CD4-positive, alpha-beta memory T cell (primary cell): ENCODE measurements at regions of chr11 and their contacts with region 1.

Region 1: DNA sequence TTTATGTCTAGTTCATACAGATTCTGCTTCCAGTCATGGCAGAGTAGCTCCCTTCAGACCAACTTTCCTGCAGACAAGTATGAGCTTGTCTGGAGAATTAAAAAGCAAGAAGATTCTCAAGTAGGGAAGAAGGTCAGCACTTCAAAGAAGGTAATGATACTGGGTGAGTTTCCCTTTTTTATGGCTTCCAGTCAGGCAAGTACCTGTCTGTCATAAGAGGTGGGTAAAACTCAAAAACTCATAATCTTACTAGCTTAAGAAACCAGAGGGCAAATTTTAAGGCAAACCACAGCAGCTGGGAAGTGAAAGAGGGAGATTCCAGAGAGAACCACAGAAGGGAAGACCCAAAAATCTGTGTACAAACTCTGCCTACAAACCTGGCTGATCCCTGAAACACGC is 54.2 kb downstream of the DENND5A start:
- DNase-seq: no peak
- H3K4me3 ChIP-seq: no peak overlapping the region
- H3K4me3 Mint-ChIP-seq: no peak overlapping the region
- H3K27ac ChIP-seq: no peak overlapping the region
- H3K27ac Mint-ChIP-seq: peak overlapping the region in 2 of 7 donors; percentile 10 to 14
- H3K4me1 ChIP-seq: peaks cover 47% of the 10 kb centered on the region
- H3K4me1 Mint-ChIP-seq: peaks cover 27 to 61% (median 46%) of the 10 kb centered on the region in 4 donors
- H3K27me3 ChIP-seq: no peaks in the 10 kb centered on the region
- H3K27me3 Mint-ChIP-seq: no peaks in the 10 kb centered on the region

Region 2: GRCh38 chr11:9132203-9132878 is 78.6 kb before region 1 on chr11:
- CTCF ChIA-PET with region 1: no interaction called
- POLR2A ChIA-PET with region 1: no interaction called
- intact Hi-C with region 1: no loop called
- DNase-seq: no peak
- H3K4me3 ChIP-seq: no peak overlapping the region
- H3K4me3 Mint-ChIP-seq: no peak overlapping the region
- H3K27ac ChIP-seq: no peak overlapping the region
- H3K27ac Mint-ChIP-seq: peak overlapping the region in 1 of 7 donors; percentile 6
- H3K4me1 ChIP-seq: peaks cover 7% of the 10 kb centered on the region
- H3K4me1 Mint-ChIP-seq: peaks cover 2 to 11% (median 6%) of the 10 kb centered on the region in 4 donors
- H3K27me3 ChIP-seq: no peaks in the 10 kb centered on the region
- H3K27me3 Mint-ChIP-seq: no peaks in the 10 kb centered on the region

Region 3: DNA sequence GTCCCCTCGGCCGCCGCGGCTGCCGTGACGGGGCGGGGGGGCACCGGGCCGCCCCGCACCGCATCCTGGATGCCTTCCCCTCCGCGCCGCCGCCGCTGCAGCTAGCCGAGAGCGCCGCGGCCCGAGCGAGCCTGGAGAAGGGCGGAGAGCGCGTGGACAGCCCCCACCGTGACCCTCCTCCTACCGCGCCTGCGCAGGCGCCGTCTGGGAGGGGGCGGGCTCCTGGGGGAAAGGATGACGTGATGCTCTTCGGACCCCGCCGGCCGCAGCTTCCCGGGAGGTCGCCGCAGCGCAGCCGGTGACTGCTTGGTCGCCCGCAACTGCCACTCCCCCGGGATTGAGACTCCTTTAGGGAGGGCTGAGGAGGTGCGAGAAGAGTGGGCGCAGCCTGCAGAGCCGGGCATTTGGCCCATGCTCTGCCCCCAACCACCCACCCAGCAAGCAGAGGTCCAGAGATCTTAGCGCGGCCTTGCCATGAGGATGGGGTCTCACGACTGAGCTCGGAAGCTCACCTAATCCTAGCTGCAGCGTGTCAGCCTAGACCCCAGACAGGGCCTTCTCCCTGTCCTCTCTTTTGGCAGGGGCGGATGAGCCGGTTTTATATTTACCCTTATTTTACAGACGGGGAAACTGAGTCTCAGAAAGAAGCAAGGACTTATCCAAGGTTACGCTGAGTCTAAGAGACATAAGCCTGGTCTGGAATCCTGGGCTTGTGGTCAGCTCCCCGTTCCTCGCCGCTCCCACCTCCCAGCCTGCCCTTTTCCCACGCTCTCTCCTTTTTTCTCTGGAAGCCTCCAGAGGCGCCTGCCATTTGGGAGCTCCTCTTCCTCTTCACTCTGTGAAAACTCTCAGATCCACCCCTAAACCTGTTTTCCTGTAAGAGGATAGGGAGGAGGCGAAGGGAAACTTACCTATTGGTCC is 54.5 kb after region 1 on chr11 and contains the start of gene DENND5A:
- CTCF ChIA-PET with region 1: no interaction called
- POLR2A ChIA-PET with region 1: no interaction called
- intact Hi-C with region 1: loop called (anchors 5 kb)
- DNase-seq: peak; percentile 32 to 51 (median 35)
- H3K4me3 ChIP-seq: peak within 1 kb of the TSS; percentile 68 to 76
- H3K4me3 Mint-ChIP-seq: peak within 1 kb of the TSS; percentile 90 to 99 (median 97)
- H3K27ac ChIP-seq: peak within 1 kb of the TSS; percentile 48
- H3K27ac Mint-ChIP-seq: peak within 1 kb of the TSS; percentile 92 to 97 (median 95)
- H3K4me1 ChIP-seq: peaks cover 33% of the 10 kb centered on the region
- H3K4me1 Mint-ChIP-seq: peaks cover 25 to 39% (median 31%) of the 10 kb centered on the region in 4 donors
- H3K27me3 ChIP-seq: no peaks in the 10 kb centered on the region
- H3K27me3 Mint-ChIP-seq: peaks cover 0 to 2% of the 10 kb centered on the region in 2 donors
- total RNA-seq, gene DENND5A: 58.6 to 61.9 TPM